ENCODE measurements at regions of chr2 and their contacts with region 1.

Region 1: GRCh38 chr2:55150834-55151233 is 81.3 kb downstream of the CLHC1 start:
- DNase-seq: no peak
- ATAC-seq: peak; percentile 80
- H3K4me3 ChIP-seq: no peak overlapping the region
- H3K27ac ChIP-seq: no peak overlapping the region
- H3K4me1 ChIP-seq: peaks cover 18% of the 10 kb centered on the region
- H3K27me3 ChIP-seq: no peaks in the 10 kb centered on the region
- CTCF ChIP-seq: no peak
- EP300 ChIP-seq: no peak
- POLR2A ChIP-seq: no peak
- RAD21 ChIP-seq: no peak

Region 2: GRCh38 chr2:54673501-54673998 is 477.3 kb before region 1 on chr2:
- CTCF ChIA-PET with region 1: no interaction called
- POLR2A ChIA-PET with region 1: no interaction called
- RAD21 ChIA-PET with region 1: no interaction called
- SMC1A ChIA-PET with region 1: no interaction called
- in situ Hi-C with region 1: no loop called
- intact Hi-C with region 1: no loop called
- DNase-seq: no peak
- ATAC-seq: peak; percentile 76
- H3K4me3 ChIP-seq: no peak overlapping the region
- H3K27ac ChIP-seq: peak overlapping the region; percentile 70
- H3K4me1 ChIP-seq: peaks cover 20% of the 10 kb centered on the region
- H3K27me3 ChIP-seq: no peaks in the 10 kb centered on the region
- CTCF ChIP-seq: no peak
- EP300 ChIP-seq: no peak
- POLR2A ChIP-seq: no peak
- RAD21 ChIP-seq: no peak

Region 3: DNA sequence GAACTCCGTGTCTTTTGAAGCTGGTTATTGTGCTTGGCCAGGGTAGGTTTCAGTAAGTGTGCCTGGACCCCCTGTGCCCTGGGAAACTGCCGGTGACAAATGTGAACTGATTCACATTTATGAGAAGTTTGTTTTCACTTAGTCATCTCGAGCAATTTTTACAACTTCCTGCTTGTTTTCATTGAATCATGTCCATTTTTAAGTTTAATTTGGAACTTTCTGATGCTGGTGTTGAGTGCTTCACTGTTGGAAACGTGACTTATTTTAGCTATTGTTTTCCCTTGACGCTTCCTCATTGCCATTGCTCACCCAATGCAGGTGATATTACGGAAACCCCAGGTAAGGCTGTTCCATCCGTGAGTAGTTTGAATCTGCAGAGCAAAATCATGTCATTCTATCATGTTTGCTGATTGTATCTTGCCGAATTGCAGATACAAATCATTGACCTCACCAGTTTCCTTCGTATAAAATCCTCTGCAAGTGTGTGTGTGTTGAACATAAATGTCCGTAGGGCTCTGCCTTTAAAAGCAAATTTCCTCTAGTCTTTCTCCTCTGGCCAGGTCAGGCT is 197.8 kb before region 1 on chr2:
- CTCF ChIA-PET with region 1: no interaction called
- POLR2A ChIA-PET with region 1: no interaction called
- RAD21 ChIA-PET with region 1: no interaction called
- SMC1A ChIA-PET with region 1: no interaction called
- in situ Hi-C with region 1: no loop called
- intact Hi-C with region 1: no loop called
- DNase-seq: no peak
- ATAC-seq: no peak
- H3K4me3 ChIP-seq: no peak overlapping the region
- H3K27ac ChIP-seq: no peak overlapping the region
- H3K4me1 ChIP-seq: no peaks in the 10 kb centered on the region; the same call in 1 of the 2 replicates
- H3K27me3 ChIP-seq: no peaks in the 10 kb centered on the region
- CTCF ChIP-seq: no peak
- EP300 ChIP-seq: no peak
- POLR2A ChIP-seq: no peak
- RAD21 ChIP-seq: no peak

Region 4: GRCh38 chr2:55137024-55137971 is 13.5 kb before region 1 on chr2:
- CTCF ChIA-PET with region 1: interaction called, 5 read pairs
- POLR2A ChIA-PET with region 1: interaction called, 6 read pairs
- RAD21 ChIA-PET with region 1: interaction called, 9 read pairs
- SMC1A ChIA-PET with region 1: interaction called, 11 read pairs
- in situ Hi-C with region 1: no loop called
- intact Hi-C with region 1: no loop called
- DNase-seq: no peak
- ATAC-seq: no peak
- H3K4me3 ChIP-seq: no peak overlapping the region
- H3K27ac ChIP-seq: no peak overlapping the region
- H3K4me1 ChIP-seq: peaks cover 15% of the 10 kb centered on the region
- H3K27me3 ChIP-seq: no peaks in the 10 kb centered on the region
- CTCF ChIP-seq: no peak
- EP300 ChIP-seq: no peak
- POLR2A ChIP-seq: no peak
- RAD21 ChIP-seq: no peak

Region 5: GRCh38 chr2:55168221-55169154 is 17.7 kb after region 1 on chr2:
- CTCF ChIA-PET with region 1: interaction called, 16 read pairs
- POLR2A ChIA-PET with region 1: no interaction called
- RAD21 ChIA-PET with region 1: interaction called, 10 read pairs
- SMC1A ChIA-PET with region 1: interaction called, 25 read pairs
- in situ Hi-C with region 1: no loop called
- intact Hi-C with region 1: no loop called
- DNase-seq: no peak
- ATAC-seq: peak; percentile 83
- H3K4me3 ChIP-seq: no peak overlapping the region
- H3K27ac ChIP-seq: no peak overlapping the region
- H3K4me1 ChIP-seq: no peaks in the 10 kb centered on the region
- H3K27me3 ChIP-seq: no peaks in the 10 kb centered on the region
- CTCF ChIP-seq: peak; percentile 73 to 74 (median 73)
- EP300 ChIP-seq: no peak
- POLR2A ChIP-seq: no peak
- RAD21 ChIP-seq: peak; percentile 89

Region 6: GRCh38 chr2:55175254-55176025 is 24.6 kb after region 1 on chr2:
- CTCF ChIA-PET with region 1: interaction called, 5 read pairs
- POLR2A ChIA-PET with region 1: no interaction called
- RAD21 ChIA-PET with region 1: interaction called, 4 read pairs
- SMC1A ChIA-PET with region 1: interaction called, 25 read pairs
- in situ Hi-C with region 1: no loop called
- intact Hi-C with region 1: no loop called
- DNase-seq: no peak
- ATAC-seq: peak; percentile 86
- H3K4me3 ChIP-seq: no peak overlapping the region
- H3K27ac ChIP-seq: no peak overlapping the region
- H3K4me1 ChIP-seq: no peaks in the 10 kb centered on the region
- H3K27me3 ChIP-seq: no peaks in the 10 kb centered on the region
- CTCF ChIP-seq: peak; percentile 39 to 68 (median 56); a peak in 4 of 6 replicates
- EP300 ChIP-seq: no peak
- POLR2A ChIP-seq: no peak
- RAD21 ChIP-seq: peak; percentile 82